HEK293T (cell line): ENCODE measurements at regions of chr22 and their contacts with region 1.

Region 1: GRCh38 chr22:17057959-17058814 is 26.6 kb upstream of the IL17RA start:
- DNase-seq: peak; percentile 87

Region 2: DNA sequence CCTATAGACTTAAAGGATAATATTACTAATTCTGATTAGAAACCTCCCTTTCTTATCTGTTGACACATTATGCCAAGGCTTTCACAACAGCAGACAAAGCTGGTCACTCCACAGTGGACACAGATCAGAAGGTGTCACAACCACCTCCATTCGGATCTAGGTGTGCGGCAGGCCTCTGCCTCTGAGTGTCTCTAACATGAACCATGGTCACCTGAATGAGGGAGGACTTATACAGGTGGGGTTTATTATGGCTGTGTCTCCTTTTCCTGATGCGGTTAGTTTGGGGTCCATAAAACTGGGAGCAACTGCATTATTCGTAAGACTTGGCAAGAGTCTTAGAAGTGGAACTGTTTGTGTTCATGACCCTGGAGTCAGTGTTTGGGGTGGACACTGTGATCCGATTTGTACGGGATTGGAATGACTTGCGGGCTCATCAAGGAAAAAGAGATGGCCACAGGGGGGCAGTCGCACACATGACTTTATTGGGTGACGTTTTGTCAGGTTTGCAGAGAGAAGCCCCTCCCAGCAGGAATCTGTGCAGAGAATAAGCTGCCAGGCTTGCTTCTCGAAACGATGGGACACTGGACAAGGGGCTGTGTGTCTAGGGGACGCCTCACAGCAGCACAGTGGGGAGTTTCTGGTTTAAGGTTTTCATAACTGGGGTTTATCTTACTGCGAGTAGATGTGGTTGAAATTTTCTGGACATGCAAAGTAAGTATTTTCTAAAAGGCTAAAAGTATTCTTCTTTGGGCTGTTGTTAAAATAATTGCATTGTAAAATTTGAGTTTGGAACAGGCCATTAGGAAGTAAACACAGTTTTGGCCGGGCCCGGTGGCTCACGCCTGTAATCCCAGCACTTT is 140.8 kb before region 1 on chr22:
- CTCF ChIA-PET with region 1: interaction called, 20 read pairs
- POLR2A ChIA-PET with region 1: no interaction called
- DNase-seq: peak; percentile 80

Region 3: DNA sequence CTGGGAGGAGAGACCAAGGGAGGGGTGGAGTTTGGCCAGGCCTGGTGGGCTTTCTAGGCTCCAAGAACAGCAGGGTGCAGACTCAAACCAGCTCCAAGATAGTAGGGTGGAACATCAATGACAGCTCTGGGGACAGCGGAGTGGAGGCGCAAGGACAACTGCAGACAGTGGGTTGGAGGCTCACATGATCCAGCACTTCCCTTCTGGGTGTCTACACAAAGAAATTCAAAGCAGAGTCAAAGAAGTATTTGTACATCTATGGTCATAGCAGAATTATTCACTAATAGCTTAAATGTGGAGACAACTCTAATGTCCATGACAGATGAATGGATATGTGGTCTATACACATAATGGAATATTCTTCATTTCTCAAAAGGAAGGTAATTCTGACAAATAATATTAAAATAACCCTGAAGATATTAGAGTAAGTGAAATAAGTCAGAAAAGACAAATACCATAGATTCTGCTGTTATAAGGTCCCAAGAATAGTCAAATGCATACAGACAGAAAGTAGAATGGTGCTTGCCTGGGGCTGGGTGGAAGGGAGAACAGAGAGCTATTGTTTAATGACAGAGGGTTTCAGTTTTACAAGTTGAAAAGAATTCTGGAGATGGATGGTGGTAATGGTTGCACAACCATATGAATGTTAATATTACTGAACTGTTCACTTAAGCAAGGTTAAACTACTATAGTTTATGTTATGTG is 44.6 kb before region 1 on chr22:
- CTCF ChIA-PET with region 1: no interaction called
- POLR2A ChIA-PET with region 1: no interaction called
- DNase-seq: peak; percentile 2

Region 4: DNA sequence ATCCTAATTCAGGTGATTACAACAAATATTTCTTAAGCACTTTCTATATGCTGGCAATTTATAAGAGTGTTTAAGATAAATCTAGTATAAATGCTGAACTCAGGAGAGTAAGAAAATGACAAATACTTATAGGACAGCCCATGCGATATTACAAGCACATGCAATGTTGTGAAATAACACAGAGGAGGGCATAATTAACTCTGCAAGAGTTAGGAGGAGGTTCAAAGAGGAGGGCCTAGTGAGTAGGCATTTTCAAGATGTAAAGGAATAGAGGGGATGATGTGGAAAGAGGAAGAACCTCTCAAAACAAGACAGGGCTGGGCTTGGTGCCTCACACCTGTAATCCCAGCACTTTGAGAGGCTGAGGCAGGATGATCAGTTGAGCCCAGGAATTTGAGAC is 10.5 kb before region 1 on chr22:
- CTCF ChIA-PET with region 1: interaction called, 15 read pairs
- POLR2A ChIA-PET with region 1: no interaction called
- DNase-seq: no peak

Region 5: GRCh38 chr22:17084554-17085276 is 26.5 kb after region 1 on chr22 and contains the start of gene IL17RA:
- CTCF ChIA-PET with region 1: no interaction called
- POLR2A ChIA-PET with region 1: no interaction called
- DNase-seq: peak; percentile 94

Region 6: DNA sequence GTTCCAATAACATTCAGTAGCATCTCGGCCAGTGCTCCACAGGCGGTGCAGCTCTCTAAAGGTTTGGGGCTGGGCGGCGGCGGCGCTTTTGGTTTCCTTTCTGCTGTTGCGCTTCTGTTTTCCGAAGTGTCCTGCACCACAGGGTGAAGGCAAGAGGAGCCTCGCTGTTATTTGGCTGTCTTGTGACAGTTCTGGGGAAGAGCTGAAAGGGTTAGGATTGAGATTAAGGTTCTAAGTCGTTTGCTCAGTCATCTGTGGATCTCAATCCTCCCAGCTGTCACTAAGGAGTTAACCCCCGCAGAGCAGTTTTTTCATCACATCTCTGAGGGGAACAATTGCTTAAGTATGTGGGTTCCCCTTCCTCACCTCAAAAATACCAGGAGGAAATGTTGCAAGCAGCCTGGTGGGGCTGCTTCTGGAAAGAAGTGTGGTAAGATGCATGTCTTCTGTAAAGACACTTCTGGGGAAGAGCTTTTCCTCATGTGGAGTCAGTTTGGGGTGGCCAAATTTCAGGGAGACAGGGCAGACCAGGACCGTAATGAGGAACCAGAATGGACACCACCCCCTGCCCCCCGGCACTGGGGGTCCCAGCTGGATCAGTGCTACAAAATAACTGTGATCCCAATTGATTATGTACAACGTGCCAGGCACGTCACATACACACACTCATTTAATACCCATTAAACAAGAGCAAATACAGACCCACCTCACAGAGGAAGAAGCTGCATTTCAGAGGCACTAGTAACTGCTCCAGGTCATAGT is 48.8 kb after region 1 on chr22:
- CTCF ChIA-PET with region 1: no interaction called
- POLR2A ChIA-PET with region 1: no interaction called
- DNase-seq: no peak